Breast epithelium (tissue), 4 donors: ENCODE measurements at regions of chr15 and their contacts with region 1.

Region 1: DNA sequence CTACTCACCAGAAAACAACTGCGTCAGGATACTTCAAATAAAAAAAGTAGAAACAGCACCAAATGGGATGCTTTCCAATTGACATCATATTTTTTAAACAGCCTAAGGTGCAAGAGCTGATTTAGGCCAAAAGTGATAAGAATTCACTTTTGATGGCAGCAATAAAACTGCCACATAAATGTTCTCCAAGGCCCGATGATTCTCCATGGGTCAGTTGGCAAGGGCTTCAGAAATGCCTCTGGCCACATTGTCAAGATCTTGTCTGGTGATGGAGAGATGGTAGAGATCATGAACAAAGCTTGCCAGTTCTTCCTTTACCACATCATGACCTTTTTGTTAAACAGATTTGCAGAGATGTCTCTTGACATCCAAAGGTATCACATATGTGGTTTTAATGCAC is 38.9 kb downstream of the LDHAL6B start:
- DNase-seq: no peak
- H3K4me3 ChIP-seq: no peak overlapping the region
- H3K27ac ChIP-seq: no peak overlapping the region
- H3K4me1 ChIP-seq: no peaks in the 10 kb centered on the region
- H3K27me3 ChIP-seq: no peaks in the 10 kb centered on the region
- CTCF ChIP-seq: no peak
- POLR2A ChIP-seq: no peak

Region 2: DNA sequence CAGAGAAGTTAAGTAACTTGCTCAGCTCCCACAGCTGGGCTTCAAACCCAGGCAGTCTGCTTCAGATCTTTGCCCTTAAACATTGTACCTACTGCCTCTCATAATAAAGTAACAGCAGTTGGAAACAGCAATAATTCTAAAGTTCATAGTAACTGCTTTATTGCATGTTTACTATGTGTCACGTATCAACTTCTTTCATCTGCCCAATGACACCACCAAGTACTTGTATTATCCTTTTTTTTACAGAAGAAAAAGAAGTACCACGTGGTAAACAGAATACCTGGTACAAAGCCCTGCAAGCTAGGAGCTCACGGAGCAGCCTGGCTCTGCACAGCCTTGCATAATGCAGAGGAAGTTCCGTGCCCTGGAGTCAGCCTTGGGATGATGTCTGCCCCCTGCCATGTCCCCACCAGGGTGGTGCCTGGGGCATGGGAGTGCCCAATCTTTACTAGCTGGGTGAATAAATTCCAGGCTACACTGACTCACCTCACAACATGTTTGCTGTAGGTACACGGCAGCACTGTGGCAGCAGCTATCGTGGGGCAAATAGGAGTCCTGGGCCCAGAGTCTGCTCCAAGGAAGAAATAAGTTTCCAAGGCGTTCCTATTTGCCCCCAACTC is 38.2 kb after region 1 on chr15:
- intact Hi-C with region 1: loop called (anchors 1 kb)
- DNase-seq: peak; percentile 36 to 56
- H3K4me3 ChIP-seq: no peak overlapping the region
- H3K27ac ChIP-seq: peak overlapping the region; percentile 2 to 46
- H3K4me1 ChIP-seq: peaks cover 0 to 7% of the 10 kb centered on the region in 2 donors
- H3K27me3 ChIP-seq: no peaks in the 10 kb centered on the region
- CTCF ChIP-seq: no peak
- POLR2A ChIP-seq: no peak